SK-N-SH (cell line): ENCODE measurements at regions of chr19 and their contacts with region 1.

Region 1: GRCh38 chr19:51777570-51778462 is 16.8 kb downstream of the FPR2 start:
- DNase-seq: peak; percentile 66
- H3K4me3 ChIP-seq: peak overlapping the region in 1 of 2 experiments; percentile 10; a peak in 1 of 4 replicates
- H3K27ac ChIP-seq: no peak overlapping the region
- H3K4me1 ChIP-seq: no peaks in the 10 kb centered on the region
- H3K27me3 ChIP-seq: no peaks in the 10 kb centered on the region
- CTCF ChIP-seq: peak; percentile 81
- EP300 ChIP-seq: no peak
- RAD21 ChIP-seq: peak; percentile 78

Region 2: GRCh38 chr19:51742789-51743188 is 35.0 kb before region 1 on chr19:
- CTCF ChIA-PET with region 1: interaction called, 11 read pairs
- POLR2A ChIA-PET with region 1: no interaction called
- DNase-seq: no peak
- H3K4me3 ChIP-seq: no peak overlapping the region
- H3K27ac ChIP-seq: peak overlapping the region in 1 of 2 experiments; percentile 76; a peak in 2 of 4 replicates
- H3K4me1 ChIP-seq: no peaks in the 10 kb centered on the region
- H3K27me3 ChIP-seq: peaks cover 38% of the 10 kb centered on the region; the same call in 1 of the 2 replicates
- CTCF ChIP-seq: no peak
- EP300 ChIP-seq: no peak
- RAD21 ChIP-seq: no peak

Region 3: DNA sequence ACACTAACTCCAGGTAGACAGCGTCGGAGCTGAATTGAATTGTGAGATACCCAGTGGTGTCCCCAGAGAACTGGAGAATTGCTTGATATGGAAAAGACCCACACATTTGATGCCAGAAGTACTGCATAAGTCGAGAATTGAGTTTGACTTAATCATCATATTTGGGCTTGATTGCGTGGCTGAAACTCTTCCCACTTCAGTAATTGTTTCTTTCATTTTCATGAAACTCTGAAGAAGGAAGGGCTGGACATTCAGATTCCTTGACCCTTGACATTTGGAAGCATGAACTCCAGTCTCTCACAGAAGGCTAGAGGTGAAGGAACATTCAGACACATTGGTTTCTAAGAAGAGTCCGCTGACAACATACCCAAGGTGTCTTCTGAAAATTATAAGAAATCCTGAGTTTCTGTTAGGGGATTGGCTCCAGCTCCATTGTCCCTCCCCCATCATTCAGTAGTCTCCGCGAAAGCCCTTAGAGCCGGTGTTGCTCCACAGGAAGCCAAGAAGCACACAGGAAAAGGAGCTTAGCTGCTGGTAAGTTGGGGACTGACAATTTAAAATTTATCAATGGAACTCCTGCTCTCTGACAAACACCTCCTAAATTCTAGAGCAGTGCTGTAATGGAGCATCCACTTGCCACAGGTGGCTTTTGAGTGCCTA is 17.0 kb before region 1 on chr19 and contains the start of gene FPR2:
- CTCF ChIA-PET with region 1: interaction called, 12 read pairs
- POLR2A ChIA-PET with region 1: no interaction called
- DNase-seq: no peak
- H3K4me3 ChIP-seq: no peak within 1 kb of the TSS
- H3K27ac ChIP-seq: no peak within 1 kb of the TSS
- H3K4me1 ChIP-seq: no peaks in the 10 kb centered on the region
- H3K27me3 ChIP-seq: peaks cover 63% of the 10 kb centered on the region; the same call in 1 of the 2 replicates
- CTCF ChIP-seq: no peak
- EP300 ChIP-seq: no peak
- RAD21 ChIP-seq: no peak
- polyA plus RNA-seq, gene FPR2: not detected in 2 replicates

Region 4: DNA sequence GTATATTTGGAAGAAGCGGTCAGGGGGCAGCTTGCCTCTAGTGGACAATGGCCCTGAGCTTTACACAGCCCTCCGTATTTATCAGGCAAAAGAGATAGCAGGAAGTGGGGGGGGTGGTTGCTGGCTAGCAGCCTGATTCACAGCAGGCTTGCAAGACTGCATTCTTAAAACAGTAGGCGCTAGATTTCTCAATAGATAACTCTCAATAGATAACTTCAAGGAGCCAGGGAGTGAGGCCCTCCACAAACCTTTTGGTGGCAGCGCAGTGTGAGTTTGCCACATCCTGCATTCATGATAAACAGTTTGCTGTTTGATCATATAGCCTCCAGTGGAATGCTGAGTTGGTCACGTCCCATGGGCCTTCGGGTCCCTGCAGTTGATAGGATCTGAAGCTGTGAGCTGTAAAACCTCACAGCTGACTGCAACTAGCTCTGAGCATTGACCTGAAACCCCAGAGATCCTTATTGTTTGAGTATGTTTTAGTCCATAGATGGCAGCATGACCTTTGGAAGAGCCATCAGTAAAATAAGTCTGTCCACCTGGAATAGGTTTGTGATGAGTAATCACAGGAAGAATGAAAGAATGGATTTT is 29.4 kb after region 1 on chr19:
- CTCF ChIA-PET with region 1: interaction called, 11 read pairs
- POLR2A ChIA-PET with region 1: no interaction called
- DNase-seq: no peak
- H3K4me3 ChIP-seq: no peak overlapping the region
- H3K27ac ChIP-seq: peak overlapping the region in 1 of 2 experiments; percentile 57; a peak in 2 of 4 replicates
- H3K4me1 ChIP-seq: peaks cover 0 to 39% of the 10 kb centered on the region in 2 experiments; a peak in 2 of 4 replicates
- H3K27me3 ChIP-seq: no peaks in the 10 kb centered on the region
- CTCF ChIP-seq: peak; percentile 17; the same call in 1 of the 2 replicates
- EP300 ChIP-seq: no peak
- RAD21 ChIP-seq: no peak

Region 5: DNA sequence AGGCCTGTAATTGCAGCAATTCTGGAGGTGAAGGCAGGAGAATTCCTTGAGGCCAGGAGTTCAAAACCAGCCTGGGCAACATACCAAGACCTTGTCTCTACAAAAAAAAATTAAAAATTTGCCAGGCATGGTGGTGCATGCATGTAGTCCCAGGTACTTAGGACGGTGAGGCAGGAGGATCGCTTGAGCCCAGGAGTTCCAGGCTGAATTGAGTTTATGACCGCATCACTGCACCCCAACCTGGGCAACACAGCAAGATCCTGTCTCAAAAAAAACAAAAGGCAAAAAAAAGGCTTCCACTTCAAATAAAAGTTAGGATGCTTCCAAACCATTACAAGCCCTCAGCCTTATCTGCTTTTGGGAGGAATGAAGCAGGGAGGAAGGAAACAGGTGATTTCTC is 104.7 kb after region 1 on chr19:
- CTCF ChIA-PET with region 1: no interaction called
- POLR2A ChIA-PET with region 1: no interaction called
- DNase-seq: no peak
- H3K4me3 ChIP-seq: no peak overlapping the region
- H3K27ac ChIP-seq: no peak overlapping the region
- H3K4me1 ChIP-seq: no peaks in the 10 kb centered on the region
- H3K27me3 ChIP-seq: no peaks in the 10 kb centered on the region
- CTCF ChIP-seq: no peak
- EP300 ChIP-seq: no peak
- RAD21 ChIP-seq: no peak